PC-9 (cell line): ENCODE measurements at regions of chr6 and their contacts with region 1.

Region 1: DNA sequence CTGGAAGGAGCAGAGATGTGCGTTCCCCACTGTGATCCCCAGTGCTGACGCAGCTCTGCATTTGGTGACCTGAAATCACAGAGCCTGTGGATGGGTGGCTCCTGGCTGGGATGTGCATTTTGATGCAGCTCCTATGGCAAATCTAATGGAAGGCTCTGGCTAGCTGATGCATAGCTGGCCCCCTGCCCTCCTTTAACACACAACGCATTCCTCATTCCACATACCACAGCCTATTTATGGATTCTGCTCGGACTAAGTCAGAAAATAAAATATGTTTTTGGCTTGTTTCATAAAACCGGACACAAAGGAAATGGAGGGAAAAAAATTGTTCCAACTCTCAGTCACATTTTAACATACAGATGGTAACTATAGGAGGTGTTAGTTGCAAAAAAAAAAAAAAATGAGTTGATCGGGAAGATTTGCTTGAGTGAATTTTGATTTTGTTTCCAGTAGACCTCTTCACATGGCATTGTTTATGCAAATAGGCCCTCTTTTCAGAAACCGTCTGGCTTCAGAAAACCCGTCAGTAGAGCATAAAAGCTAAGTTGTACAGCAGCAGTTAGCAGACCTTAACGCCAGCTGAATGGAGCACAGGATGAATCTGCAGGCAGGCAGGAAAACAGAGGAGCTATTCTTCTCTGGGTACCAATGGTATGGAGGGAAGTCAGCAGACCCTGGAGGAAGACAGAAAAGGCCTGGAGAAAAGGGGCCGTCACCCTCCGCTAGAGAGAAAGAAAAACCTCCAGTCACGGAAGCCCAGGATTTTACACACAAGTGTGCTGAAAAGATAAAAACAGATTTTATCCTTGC is 215.4 kb downstream of the HDGFL1 start:
- DNase-seq: no peak
- H3K4me3 ChIP-seq: no peak overlapping the region
- H3K27ac ChIP-seq: no peak overlapping the region
- H3K4me1 ChIP-seq: no peaks in the 10 kb centered on the region
- H3K27me3 ChIP-seq: no peaks in the 10 kb centered on the region
- CTCF ChIP-seq: no peak

Region 2: GRCh38 chr6:21653905-21654304 is 1130.9 kb before region 1 on chr6:
- CTCF ChIA-PET with region 1: no interaction called
- POLR2A ChIA-PET with region 1: interaction called, 39 read pairs
- intact Hi-C with region 1: no loop called
- DNase-seq: no peak
- H3K4me3 ChIP-seq: no peak overlapping the region
- H3K27ac ChIP-seq: no peak overlapping the region
- H3K4me1 ChIP-seq: no peaks in the 10 kb centered on the region
- H3K27me3 ChIP-seq: no peaks in the 10 kb centered on the region
- CTCF ChIP-seq: no peak

Region 3: DNA sequence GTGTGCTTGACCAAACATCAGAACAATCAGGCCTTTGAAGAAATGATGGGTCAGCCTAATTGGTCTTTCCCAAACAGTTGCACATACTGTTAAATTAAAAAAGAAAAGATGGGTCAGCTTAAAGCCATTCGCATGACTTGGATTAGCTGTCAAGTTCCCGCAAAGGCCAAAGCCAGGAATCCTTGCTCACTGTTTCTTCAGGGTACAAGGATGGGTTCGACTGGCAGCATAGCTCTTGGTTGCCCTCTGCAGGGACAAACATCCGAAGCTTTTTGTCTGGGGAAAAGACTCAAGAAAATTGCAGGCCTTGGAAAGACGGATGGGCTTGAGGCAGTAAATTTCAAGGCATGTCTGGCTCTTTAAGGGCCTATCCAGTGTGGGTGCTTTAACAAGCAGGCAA is 47.5 kb before region 1 on chr6:
- CTCF ChIA-PET with region 1: no interaction called
- POLR2A ChIA-PET with region 1: interaction called, 12 read pairs
- intact Hi-C with region 1: no loop called
- DNase-seq: peak in 1 of 2 experiments; percentile 3
- H3K4me3 ChIP-seq: no peak overlapping the region
- H3K27ac ChIP-seq: no peak overlapping the region
- H3K4me1 ChIP-seq: no peaks in the 10 kb centered on the region
- H3K27me3 ChIP-seq: no peaks in the 10 kb centered on the region
- CTCF ChIP-seq: peak; percentile 36; the same call in 1 of the 2 replicates